ENCODE measurements at regions of chrX and their contacts with region 1.

Region 1: GRCh38 chrX:94831364-94831763 is 1157.4 kb downstream of the FAM133A start:
- DNase-seq: no peak
- ATAC-seq: no peak
- H3K4me3 ChIP-seq: no peak overlapping the region
- H3K27ac ChIP-seq: no peak overlapping the region
- H3K4me1 ChIP-seq: no peaks in the 10 kb centered on the region
- H3K27me3 ChIP-seq: no peaks in the 10 kb centered on the region
- CTCF ChIP-seq: peak; percentile 22; the same call in 1 of the 2 replicates

Region 2: DNA sequence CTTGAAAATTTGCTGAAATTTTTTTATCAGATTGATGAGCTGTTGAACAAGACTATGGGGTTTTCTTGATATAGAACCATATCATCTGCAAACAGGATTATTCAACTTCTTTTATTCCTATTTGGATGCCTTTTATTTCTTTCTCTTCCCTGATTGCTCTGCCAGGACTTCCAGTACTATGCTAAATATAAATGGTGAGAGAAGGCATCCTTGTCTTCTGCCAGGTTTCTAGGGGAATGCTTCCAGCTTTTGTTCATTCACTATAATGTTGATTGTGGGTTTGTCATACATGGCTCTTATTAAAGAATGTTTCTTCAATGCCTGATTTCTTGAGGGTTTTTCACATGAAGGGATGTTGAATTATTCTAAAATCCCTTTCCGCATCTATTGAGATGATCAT is 17.8 kb before region 1 on chrX:
- CTCF ChIA-PET with region 1: no interaction called
- POLR2A ChIA-PET with region 1: no interaction called
- in situ Hi-C with region 1: no loop called
- intact Hi-C with region 1: no loop called
- DNase-seq: no peak
- ATAC-seq: no peak
- H3K4me3 ChIP-seq: no peak overlapping the region
- H3K27ac ChIP-seq: no peak overlapping the region
- H3K4me1 ChIP-seq: no peaks in the 10 kb centered on the region
- H3K27me3 ChIP-seq: no peaks in the 10 kb centered on the region
- CTCF ChIP-seq: no peak

Region 3: GRCh38 chrX:94850811-94851210 is 19.4 kb after region 1 on chrX:
- CTCF ChIA-PET with region 1: no interaction called
- POLR2A ChIA-PET with region 1: no interaction called
- in situ Hi-C with region 1: no loop called
- intact Hi-C with region 1: no loop called
- DNase-seq: no peak
- ATAC-seq: no peak
- H3K4me3 ChIP-seq: no peak overlapping the region
- H3K27ac ChIP-seq: no peak overlapping the region
- H3K4me1 ChIP-seq: no peaks in the 10 kb centered on the region
- H3K27me3 ChIP-seq: no peaks in the 10 kb centered on the region
- CTCF ChIP-seq: no peak

Region 4: DNA sequence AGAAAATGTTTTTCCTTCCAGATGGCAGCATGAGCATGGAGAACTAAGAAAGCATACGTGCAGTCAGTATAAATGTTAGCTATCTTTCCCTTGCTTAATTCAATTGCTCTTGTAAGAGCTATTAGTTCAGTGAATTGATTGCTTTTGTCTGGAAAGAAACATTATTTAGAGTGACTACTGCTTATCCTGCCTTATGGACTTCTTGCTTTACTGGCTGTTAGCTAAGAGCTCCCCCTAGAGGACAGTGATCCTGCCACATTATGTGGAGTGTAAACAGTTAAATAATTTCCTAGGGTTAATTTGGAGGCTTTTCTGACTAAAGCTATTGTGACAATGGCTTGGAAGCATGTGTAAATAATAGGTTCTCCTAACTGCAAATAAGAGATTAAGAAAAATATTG is 245.1 kb after region 1 on chrX:
- CTCF ChIA-PET with region 1: no interaction called
- POLR2A ChIA-PET with region 1: no interaction called
- in situ Hi-C with region 1: no loop called
- intact Hi-C with region 1: loop called (anchors 10 kb)
- DNase-seq: no peak
- ATAC-seq: no peak
- H3K4me3 ChIP-seq: no peak overlapping the region
- H3K27ac ChIP-seq: no peak overlapping the region
- H3K4me1 ChIP-seq: no peaks in the 10 kb centered on the region
- H3K27me3 ChIP-seq: no peaks in the 10 kb centered on the region
- CTCF ChIP-seq: peak; percentile 58; the same call in 1 of the 2 replicates

Region 5: DNA sequence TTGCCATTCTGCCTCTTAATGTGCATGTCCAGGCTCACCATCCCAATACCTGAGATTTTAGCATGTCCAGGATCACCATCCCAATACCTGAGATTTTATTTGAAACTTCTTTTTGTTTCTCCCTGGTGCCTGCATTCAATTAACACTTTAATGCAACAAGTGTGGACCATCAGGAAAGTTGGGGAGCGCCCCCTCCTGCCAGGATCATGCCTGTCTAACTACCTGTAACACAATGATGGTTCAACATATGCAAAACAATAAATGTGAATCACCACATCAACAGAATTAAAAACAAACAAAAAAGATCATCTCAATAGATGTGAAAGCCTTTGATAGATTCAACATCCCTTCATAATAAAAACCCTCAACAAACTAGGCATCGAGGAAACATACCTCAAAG is 493.8 kb after region 1 on chrX:
- CTCF ChIA-PET with region 1: no interaction called
- POLR2A ChIA-PET with region 1: no interaction called
- in situ Hi-C with region 1: no loop called
- intact Hi-C with region 1: no loop called
- DNase-seq: no peak
- ATAC-seq: no peak
- H3K4me3 ChIP-seq: no peak overlapping the region
- H3K27ac ChIP-seq: no peak overlapping the region
- H3K4me1 ChIP-seq: no peaks in the 10 kb centered on the region
- H3K27me3 ChIP-seq: no peaks in the 10 kb centered on the region
- CTCF ChIP-seq: 0 out of 2 replicates have a peak, but pooled peaks have one; percentile 2